Motor neuron (in vitro differentiated cells): ENCODE measurements at regions of chr17 and their contacts with region 1.

Region 1: DNA sequence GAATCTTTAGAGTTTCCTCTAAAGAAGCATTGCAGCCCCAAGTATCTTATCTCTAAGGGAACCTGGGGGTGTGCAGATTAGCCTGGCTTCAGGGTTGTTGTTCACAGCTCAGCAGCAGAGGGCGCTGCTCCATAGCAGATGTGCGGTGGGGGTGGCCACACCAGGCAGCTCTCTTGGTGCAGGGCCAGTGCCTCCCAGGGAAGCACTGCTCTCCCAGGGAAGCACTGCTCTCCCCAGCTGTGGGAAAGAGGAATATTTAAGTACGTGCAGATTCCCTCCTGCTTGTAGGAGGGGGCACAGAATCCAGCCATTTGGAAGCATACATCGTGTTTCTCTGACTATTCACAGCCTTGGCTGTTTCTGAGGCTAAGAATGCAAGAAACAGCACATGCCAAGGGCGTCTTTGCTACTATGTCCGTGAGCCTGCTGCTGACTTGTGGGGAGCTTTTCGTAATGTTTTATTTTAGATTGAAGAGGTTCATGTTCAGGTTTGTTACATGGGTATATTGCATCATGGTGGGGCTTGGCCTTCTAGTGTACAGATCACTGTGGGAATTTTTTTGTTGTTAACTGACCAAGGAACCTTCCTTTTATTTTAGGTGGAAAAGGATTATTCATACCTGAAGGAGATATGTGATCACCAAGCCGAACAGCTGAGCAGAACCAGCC is 217.8 kb downstream of the SPECC1 start:
- ATAC-seq: peak; percentile 76 to 100 (median 96)
- H3K4me3 ChIP-seq: no peak overlapping the region
- H3K27ac ChIP-seq: no peak overlapping the region
- H3K4me1 ChIP-seq: peaks cover 4 to 11% of the 10 kb centered on the region in 2 donors

Region 2: DNA sequence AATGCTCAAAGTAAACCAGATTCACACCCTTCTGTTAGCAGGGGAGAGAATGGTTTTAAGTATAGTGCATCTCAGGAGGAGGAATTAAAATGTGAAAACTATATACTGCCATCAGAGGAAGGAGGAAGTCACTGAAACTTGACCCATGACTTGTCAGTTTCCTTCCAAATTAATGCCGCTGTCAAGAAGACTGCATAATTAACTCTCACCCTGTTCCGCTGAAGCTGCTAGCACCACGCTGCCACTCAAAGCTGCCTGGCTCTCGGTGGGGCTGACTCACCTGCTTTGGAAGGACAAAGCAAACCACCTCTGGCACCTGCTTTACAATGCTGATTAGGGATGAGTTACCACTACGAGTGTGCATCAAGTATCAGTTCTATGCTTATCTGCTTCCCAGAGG is 321.4 kb before region 1 on chr17:
- in situ Hi-C with region 1: no loop called
- ATAC-seq: no peak
- H3K4me3 ChIP-seq: no peak overlapping the region
- H3K27ac ChIP-seq: no peak overlapping the region
- H3K4me1 ChIP-seq: no peaks in the 10 kb centered on the region

Region 3: DNA sequence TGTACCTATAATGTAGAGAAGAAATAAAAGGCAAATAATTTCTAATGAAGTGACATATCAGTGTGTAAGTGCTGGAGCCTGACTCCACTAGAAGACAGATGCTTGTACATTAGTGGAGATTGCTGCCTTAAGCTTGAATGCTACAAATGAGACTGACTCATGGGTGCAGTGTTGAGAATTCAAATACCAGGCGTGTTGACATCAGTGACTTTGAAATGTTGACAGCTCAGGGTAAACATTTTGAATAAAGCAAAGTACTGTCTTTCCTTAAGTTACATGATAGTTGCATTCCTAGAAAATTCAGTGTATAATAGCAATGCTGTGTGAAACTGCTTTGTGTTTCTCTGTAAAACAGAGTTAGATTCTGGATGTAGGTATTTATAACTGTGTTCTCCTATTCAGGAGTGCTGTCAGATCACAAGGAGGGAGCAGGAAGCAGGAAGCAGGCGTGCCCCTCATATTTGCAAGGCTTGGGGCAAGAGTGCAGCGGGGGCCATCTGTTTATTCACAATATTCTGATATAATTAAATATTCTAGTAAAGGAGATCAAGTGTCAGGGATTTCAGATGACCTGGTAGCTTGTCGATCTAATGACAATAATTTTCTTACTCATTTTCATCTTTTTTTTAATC is 98.8 kb before region 1 on chr17:
- in situ Hi-C with region 1: loop called in 2 of 9 experiments (anchors 25 kb)
- ATAC-seq: peak; percentile 64 to 98 (median 91)
- H3K4me3 ChIP-seq: no peak overlapping the region
- H3K27ac ChIP-seq: no peak overlapping the region
- H3K4me1 ChIP-seq: peaks cover 0 to 11% of the 10 kb centered on the region in 2 donors

Region 4: DNA sequence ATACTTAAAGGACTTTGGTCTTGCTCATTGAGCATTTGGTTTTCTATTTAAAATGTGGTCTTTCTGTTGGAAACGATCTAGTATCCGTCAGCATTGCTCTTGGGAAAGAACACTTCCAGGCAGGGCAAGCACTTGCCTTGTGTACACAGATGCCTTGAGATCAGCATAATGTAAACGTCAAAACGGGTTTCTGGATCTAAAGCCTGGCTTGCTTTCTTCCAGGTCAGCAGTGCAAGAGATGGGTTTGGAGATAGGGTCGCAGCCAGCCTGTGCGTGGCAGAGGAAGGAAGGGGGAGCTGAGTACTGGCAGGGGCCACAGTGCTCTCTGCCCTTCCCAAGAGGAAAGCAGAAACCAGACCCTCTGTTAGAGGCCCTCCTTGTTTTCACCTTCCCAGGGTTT is 64.9 kb after region 1 on chr17:
- in situ Hi-C with region 1: no loop called
- ATAC-seq: peak in 2 of 8 experiments; percentile 61 to 87
- H3K4me3 ChIP-seq: no peak overlapping the region
- H3K27ac ChIP-seq: no peak overlapping the region
- H3K4me1 ChIP-seq: no peaks in the 10 kb centered on the region